WTC11 (cell line): ENCODE measurements at regions of chr10 and their contacts with region 1.

Region 1: GRCh38 chr10:30581779-30582380 is 47.7 kb downstream of the LYZL2 start:
- DNase-seq: peak; percentile 26
- ATAC-seq: peak; percentile 67; the same call in 1 of the 2 replicates
- H3K4me3 Mint-ChIP-seq: no peak overlapping the region
- H3K27ac Mint-ChIP-seq: no peak overlapping the region
- H3K4me1 Mint-ChIP-seq: peaks cover 21% of the 10 kb centered on the region
- H3K27me3 Mint-ChIP-seq: no peaks in the 10 kb centered on the region
- CTCF ChIP-seq: peak; percentile 76

Region 2: DNA sequence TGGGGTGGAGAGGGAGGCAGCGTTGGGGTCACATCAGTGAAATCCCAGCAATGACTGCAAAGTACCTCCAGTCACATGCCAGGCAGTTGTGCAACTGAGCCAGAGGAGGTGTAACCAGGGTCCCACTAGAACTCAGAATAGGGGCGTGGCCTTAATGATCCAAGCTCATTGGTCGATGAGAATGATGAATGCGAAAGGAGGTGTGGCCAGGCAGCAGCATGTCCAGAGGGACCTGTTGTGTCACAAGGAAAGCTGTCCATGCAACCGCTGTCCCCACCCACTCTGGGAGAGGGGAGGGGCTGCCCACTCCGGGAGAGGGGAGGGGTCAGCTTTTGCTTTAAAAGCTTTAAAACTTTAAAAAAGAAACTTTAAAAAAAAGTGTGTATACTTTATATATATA is 207.5 kb before region 1 on chr10:
- CTCF ChIA-PET with region 1: interaction called, 11 read pairs
- POLR2A ChIA-PET with region 1: no interaction called
- DNase-seq: peak; percentile 71
- ATAC-seq: peak; percentile 90
- H3K4me3 Mint-ChIP-seq: no peak overlapping the region
- H3K27ac Mint-ChIP-seq: no peak overlapping the region
- H3K4me1 Mint-ChIP-seq: peaks cover 48% of the 10 kb centered on the region
- H3K27me3 Mint-ChIP-seq: peaks cover 19% of the 10 kb centered on the region
- CTCF ChIP-seq: no peak

Region 3: GRCh38 chr10:30392564-30392990 is 189.3 kb before region 1 on chr10:
- CTCF ChIA-PET with region 1: interaction called, 10 read pairs
- POLR2A ChIA-PET with region 1: no interaction called
- DNase-seq: peak; percentile 85
- ATAC-seq: peak; percentile 100
- H3K4me3 Mint-ChIP-seq: peak overlapping the region; percentile 37; the same call in 1 of the 2 replicates
- H3K27ac Mint-ChIP-seq: no peak overlapping the region
- H3K4me1 Mint-ChIP-seq: peaks cover 4% of the 10 kb centered on the region; the same call in 1 of the 2 replicates
- H3K27me3 Mint-ChIP-seq: no peaks in the 10 kb centered on the region; the same call in 1 of the 2 replicates
- CTCF ChIP-seq: peak; percentile 93

Region 4: DNA sequence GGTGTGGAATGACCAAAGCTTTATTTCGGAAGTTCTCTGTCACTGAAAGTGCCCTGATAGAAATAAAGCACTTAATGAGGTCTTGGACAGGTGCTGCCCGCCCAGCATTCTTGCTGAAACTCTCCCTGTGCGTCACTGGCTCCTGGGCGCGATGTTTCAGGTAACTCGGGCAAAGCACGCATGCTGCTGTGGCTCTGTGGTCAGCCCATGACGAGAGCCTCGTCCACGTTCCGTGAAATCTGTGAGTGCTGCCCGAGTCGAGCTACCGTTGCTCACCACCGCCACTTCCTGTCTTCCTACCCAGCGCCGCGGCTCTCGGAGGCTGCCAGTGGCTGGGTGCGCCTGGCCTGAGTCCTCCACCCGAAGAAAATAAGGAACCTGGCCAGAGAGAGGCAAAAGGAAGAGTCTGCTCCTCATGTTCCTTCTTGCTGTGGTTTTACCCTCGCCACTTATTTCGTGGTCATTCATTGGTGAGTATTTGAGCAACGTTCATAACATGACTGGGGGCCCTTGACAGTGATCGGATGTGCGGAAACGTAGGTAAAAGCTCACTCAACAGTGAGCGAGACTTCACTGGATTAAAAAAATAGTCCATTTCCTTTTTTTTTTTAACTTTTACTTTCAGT is 52.4 kb before region 1 on chr10:
- CTCF ChIA-PET with region 1: interaction called, 13 read pairs
- POLR2A ChIA-PET with region 1: no interaction called
- DNase-seq: peak; percentile 12
- ATAC-seq: no peak
- H3K4me3 Mint-ChIP-seq: no peak overlapping the region
- H3K27ac Mint-ChIP-seq: 0 out of 2 replicates have a peak overlapping the region, but pooled peaks have one; percentile 47
- H3K4me1 Mint-ChIP-seq: peaks cover 37% of the 10 kb centered on the region
- H3K27me3 Mint-ChIP-seq: no peaks in the 10 kb centered on the region
- CTCF ChIP-seq: no peak

Region 5: DNA sequence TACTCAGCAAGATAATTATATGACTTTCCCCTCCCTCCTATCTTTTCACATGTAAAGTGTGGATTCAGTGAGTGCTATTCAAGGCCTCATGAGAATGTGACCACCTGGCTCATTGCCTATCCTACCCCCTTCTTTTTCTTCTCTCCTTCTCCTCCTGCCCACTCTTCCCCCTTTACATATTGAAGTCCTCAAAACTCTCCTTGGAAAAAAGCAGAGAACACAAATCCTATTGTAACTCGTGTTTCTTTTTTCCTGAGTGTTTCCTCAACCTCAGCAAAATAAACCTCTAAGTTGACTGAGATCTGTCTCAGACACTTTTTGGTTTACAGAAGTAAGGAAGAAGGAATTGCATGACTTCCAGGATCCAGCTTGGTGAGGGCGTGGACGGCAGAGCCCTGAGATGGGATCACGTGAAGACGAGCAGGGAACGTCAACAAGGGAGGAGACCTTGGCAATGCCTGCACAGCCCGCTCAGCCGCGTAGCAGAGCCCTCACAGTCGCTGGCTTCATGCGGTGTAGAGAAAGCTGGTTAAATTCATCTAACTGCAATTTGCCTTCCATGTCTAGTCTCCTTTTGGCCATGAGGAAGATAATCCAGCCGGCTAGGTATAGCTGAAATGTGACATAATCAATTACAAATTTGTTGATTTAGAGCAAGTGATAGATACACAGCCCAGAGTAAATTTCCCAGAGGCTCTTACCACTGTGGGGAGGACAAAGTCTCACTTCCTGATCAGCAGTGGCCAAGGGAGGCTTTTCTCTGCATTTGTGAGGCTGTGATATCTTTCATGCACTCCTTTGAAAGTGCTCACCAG is 28.0 kb before region 1 on chr10:
- CTCF ChIA-PET with region 1: interaction called, 17 read pairs
- POLR2A ChIA-PET with region 1: interaction called, 3 read pairs
- DNase-seq: peak; percentile 65
- ATAC-seq: peak; percentile 89
- H3K4me3 Mint-ChIP-seq: peak overlapping the region; percentile 54
- H3K27ac Mint-ChIP-seq: peak overlapping the region; percentile 98
- H3K4me1 Mint-ChIP-seq: peaks cover 44% of the 10 kb centered on the region
- H3K27me3 Mint-ChIP-seq: no peaks in the 10 kb centered on the region
- CTCF ChIP-seq: no peak

Region 6: DNA sequence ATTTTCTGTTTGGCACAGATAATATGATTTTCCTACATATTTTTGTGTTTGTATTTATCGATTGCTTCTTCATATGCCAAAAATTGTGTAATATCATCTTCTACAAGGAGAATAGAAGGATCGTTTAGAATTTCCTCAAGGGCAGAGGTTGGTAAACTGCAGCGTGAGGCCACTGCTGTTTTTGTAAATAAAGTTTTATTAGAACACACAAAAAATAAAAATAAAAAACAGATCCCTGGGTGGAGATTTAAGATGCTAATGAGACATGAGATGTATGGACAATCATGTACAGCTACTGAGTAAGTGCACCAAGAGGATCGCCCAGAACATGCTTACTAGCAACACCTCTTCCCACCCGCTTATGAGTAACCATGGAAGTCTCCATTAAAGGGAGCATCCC is 38.1 kb after region 1 on chr10:
- CTCF ChIA-PET with region 1: no interaction called
- POLR2A ChIA-PET with region 1: no interaction called
- DNase-seq: no peak
- ATAC-seq: no peak
- H3K4me3 Mint-ChIP-seq: no peak overlapping the region
- H3K27ac Mint-ChIP-seq: no peak overlapping the region
- H3K4me1 Mint-ChIP-seq: peaks cover 4% of the 10 kb centered on the region
- H3K27me3 Mint-ChIP-seq: no peaks in the 10 kb centered on the region
- CTCF ChIP-seq: no peak